ENCODE measurements at regions of chr11 and their contacts with region 1.

Region 1: GRCh38 chr11:112280268-112281126 is 19.8 kb upstream of the PLET1 start:
- DNase-seq: peak; percentile 22 to 88 (median 58)
- ATAC-seq: peak; percentile 87 to 95 (median 90)
- H3K4me3 ChIP-seq: peak overlapping the region; percentile 67 to 75
- H3K4me3 Mint-ChIP-seq: peak overlapping the region; percentile 86 to 89 (median 88)
- H3K27ac ChIP-seq: peak overlapping the region; percentile 26
- H3K27ac Mint-ChIP-seq: peak overlapping the region; percentile 73 to 83
- H3K4me1 ChIP-seq: peaks cover 3 to 17% of the 10 kb centered on the region in 2 experiments
- H3K4me1 Mint-ChIP-seq: peaks cover 15 to 21% (median 16%) of the 10 kb centered on the region in 3 donors
- H3K27me3 ChIP-seq: peaks cover 0 to 3% of the 10 kb centered on the region in 2 experiments
- H3K27me3 Mint-ChIP-seq: no peaks in the 10 kb centered on the region

Region 2: GRCh38 chr11:112213753-112214152 is 66.7 kb before region 1 on chr11:
- CTCF ChIA-PET with region 1: interaction called, 94 to 121 read pairs
- POLR2A ChIA-PET with region 1: no interaction called
- DNase-seq: no peak
- ATAC-seq: no peak
- H3K4me3 ChIP-seq: no peak overlapping the region
- H3K4me3 Mint-ChIP-seq: no peak overlapping the region
- H3K27ac ChIP-seq: no peak overlapping the region
- H3K27ac Mint-ChIP-seq: no peak overlapping the region
- H3K4me1 ChIP-seq: peaks cover 0 to 10% of the 10 kb centered on the region in 2 experiments
- H3K4me1 Mint-ChIP-seq: peaks cover 0 to 12% (median 10%) of the 10 kb centered on the region in 3 donors
- H3K27me3 ChIP-seq: no peaks in the 10 kb centered on the region
- H3K27me3 Mint-ChIP-seq: peaks cover 2 to 4% of the 10 kb centered on the region in 2 donors

Region 3: DNA sequence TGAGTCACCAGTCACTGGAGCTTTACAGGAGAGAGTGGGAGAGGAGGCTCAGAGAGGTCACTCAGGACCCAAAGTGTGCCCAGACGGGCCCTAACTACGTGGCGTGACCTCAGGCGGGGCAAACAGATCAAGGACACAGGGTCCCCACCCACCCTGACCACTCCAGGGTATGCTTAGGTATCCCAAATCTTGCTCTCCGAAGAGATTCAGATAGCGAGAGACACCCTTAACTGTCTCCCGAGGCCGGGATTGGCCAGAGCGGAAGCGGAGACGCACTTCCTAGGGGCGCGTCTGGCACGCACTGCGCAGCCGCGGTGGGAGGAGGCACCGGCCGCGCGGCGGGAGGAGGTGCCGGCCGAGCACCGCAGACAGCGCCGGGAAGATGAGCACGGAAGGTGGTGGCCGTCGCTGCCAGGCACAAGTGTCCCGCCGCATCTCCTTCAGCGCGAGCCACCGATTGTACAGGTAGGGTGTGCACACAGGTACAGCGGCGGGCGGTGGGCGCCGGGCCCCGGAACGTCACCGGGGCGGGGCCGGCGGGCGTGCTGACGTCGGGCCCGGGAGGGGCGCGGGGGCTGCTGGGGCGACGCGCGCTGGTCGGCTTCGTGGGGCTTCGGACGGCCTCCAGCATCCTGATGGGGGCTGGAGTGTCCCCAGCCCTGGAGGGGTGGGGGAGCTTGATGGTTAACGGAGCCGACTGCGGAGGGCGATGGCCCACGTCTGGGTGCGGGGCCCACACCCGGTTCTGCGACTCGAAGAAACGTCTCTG is 54.3 kb before region 1 on chr11 and contains the start of gene PTS:
- CTCF ChIA-PET with region 1: interaction called, 94 to 121 read pairs
- POLR2A ChIA-PET with region 1: interaction called, 3 to 6 read pairs
- DNase-seq: peak; percentile 68 to 91 (median 77)
- ATAC-seq: peak; percentile 90 to 95 (median 94)
- H3K4me3 ChIP-seq: peak within 1 kb of the TSS; percentile 95
- H3K4me3 Mint-ChIP-seq: peak within 1 kb of the TSS; percentile 87 to 89 (median 89)
- H3K27ac ChIP-seq: peak within 1 kb of the TSS; percentile 99
- H3K27ac Mint-ChIP-seq: peak within 1 kb of the TSS; percentile 96 to 97
- H3K4me1 ChIP-seq: peaks cover 13 to 17% of the 10 kb centered on the region in 2 experiments
- H3K4me1 Mint-ChIP-seq: peaks cover 16 to 33% (median 30%) of the 10 kb centered on the region in 3 donors
- H3K27me3 ChIP-seq: peaks cover 0 to 4% of the 10 kb centered on the region in 2 experiments
- H3K27me3 Mint-ChIP-seq: no peaks in the 10 kb centered on the region
- total RNA-seq, gene PTS: 15.1 to 65.8 (median 21.0) TPM

Region 4: GRCh38 chr11:112541140-112541901 is 260.8 kb after region 1 on chr11:
- CTCF ChIA-PET with region 1: interaction called, 3 to 13 read pairs
- POLR2A ChIA-PET with region 1: no interaction called
- DNase-seq: no peak
- ATAC-seq: peak in 3 of 4 experiments; percentile 29 to 69 (median 45)
- H3K4me3 ChIP-seq: no peak overlapping the region
- H3K4me3 Mint-ChIP-seq: peak overlapping the region in 1 of 3 donors; percentile 17
- H3K27ac ChIP-seq: no peak overlapping the region
- H3K27ac Mint-ChIP-seq: peak overlapping the region in 1 of 2 donors; percentile 36
- H3K4me1 ChIP-seq: peaks cover 3 to 14% of the 10 kb centered on the region in 2 experiments
- H3K4me1 Mint-ChIP-seq: peaks cover 25 to 44% (median 26%) of the 10 kb centered on the region in 3 donors
- H3K27me3 ChIP-seq: no peaks in the 10 kb centered on the region
- H3K27me3 Mint-ChIP-seq: peaks cover 2 to 4% of the 10 kb centered on the region in 2 donors

Region 5: GRCh38 chr11:113289431-113290187 is 1009.1 kb after region 1 on chr11:
- CTCF ChIA-PET with region 1: interaction called in 1 of 2 experiments, 11 read pairs
- POLR2A ChIA-PET with region 1: interaction called in 1 of 2 experiments, 4 read pairs
- DNase-seq: peak in 34 of 35 experiments; percentile 21 to 74 (median 49)
- ATAC-seq: peak; percentile 77 to 93 (median 85)
- H3K4me3 ChIP-seq: no peak overlapping the region
- H3K4me3 Mint-ChIP-seq: no peak overlapping the region
- H3K27ac ChIP-seq: no peak overlapping the region
- H3K27ac Mint-ChIP-seq: no peak overlapping the region
- H3K4me1 ChIP-seq: peaks cover 0 to 3% of the 10 kb centered on the region in 2 experiments
- H3K4me1 Mint-ChIP-seq: no peaks in the 10 kb centered on the region
- H3K27me3 ChIP-seq: peaks cover 0 to 3% of the 10 kb centered on the region in 2 experiments
- H3K27me3 Mint-ChIP-seq: peaks cover 13 to 20% of the 10 kb centered on the region in 2 donors

Measured in T-cell (primary cell).